Dendritic cell treated with granulocyte-macrophage colony-stimulating factor and Interleukin-4, amounts not matched to agents 40 ng/mL and 50 ng/mL, for 4 days (primary cell): ENCODE measurements at regions of chr6 and their contacts with region 1.

Region 1: DNA sequence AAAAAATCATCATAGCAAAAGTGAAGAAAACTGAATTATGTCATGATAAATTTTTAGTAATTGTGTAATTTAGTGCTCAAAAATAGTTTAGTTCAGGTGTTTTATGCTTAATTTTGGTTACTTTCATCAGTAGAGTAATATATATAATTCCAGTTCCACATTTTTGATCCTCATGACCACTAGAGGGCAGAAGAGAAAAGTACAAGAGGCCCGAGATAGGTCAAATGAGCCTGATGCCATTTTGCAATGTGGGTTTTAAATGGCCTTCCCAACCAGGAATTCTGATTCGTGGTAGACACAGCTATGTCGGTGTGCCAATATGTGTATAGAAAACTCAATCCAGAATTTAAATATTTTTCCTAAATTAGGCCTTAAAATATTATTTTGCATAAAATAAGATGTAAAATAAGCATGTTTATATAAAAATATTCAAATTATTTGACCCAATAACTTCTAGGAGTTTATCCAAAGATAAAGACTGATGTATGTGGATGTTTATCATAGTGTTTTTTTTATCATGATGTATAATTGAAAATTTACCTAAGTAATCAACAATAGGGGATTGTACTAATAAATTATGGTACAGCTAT is 159.7 kb upstream of the RPS6KA2 start:
- H3K4me3 Mint-ChIP-seq: no peak overlapping the region
- H3K27ac Mint-ChIP-seq: no peak overlapping the region
- H3K4me1 Mint-ChIP-seq: no peaks in the 10 kb centered on the region
- H3K27me3 Mint-ChIP-seq: peaks cover 7% of the 10 kb centered on the region

Region 2: GRCh38 chr6:166989427-166990032 is 202.7 kb after region 1 on chr6:
- intact Hi-C with region 1: loop called (anchors 1 kb)
- H3K4me3 Mint-ChIP-seq: no peak overlapping the region
- H3K27ac Mint-ChIP-seq: no peak overlapping the region
- H3K4me1 Mint-ChIP-seq: peaks cover 18% of the 10 kb centered on the region
- H3K27me3 Mint-ChIP-seq: no peaks in the 10 kb centered on the region